GM12878 (cell line): ENCODE measurements at regions of chr6 and their contacts with region 1.

Region 1: GRCh38 chr6:116405138-116405537 is 34.4 kb downstream of the DSE start:
- DNase-seq: peak; percentile 82
- ATAC-seq: peak; percentile 67
- H3K4me3 ChIP-seq: peak overlapping the region; percentile 46; the same call in 1 of the 2 replicates
- H3K27ac ChIP-seq: peak overlapping the region; percentile 90
- H3K4me1 ChIP-seq: peaks cover 52% of the 10 kb centered on the region
- H3K27me3 ChIP-seq: no peaks in the 10 kb centered on the region
- CTCF ChIP-seq: no peak
- EP300 ChIP-seq: 0 out of 4 replicates have a peak, but pooled peaks have one; percentile 37 to 44
- POLR2A ChIP-seq: 0 out of 2 replicates have a peak, but pooled peaks have one; percentile 28
- RAD21 ChIP-seq: no peak

Region 2: DNA sequence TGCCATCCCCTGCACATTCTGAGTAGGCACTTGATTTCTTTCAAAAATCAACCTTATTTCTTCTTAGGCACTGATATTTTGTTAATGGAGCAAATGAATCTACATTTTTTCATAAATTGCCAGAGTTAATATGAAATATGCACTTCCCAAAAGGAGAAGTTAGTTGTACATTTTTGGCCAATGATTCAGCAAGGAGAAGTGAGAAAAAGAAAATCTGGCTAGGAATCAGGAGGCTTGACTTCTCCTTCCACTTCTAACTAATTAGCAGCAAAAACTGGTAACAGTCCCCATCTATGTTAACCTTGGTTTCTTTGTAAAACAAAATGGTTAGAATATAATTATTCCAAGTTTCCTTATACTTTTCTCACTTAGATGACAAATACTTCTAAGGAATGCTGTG is 41.4 kb before region 1 on chr6:
- CTCF ChIA-PET with region 1: interaction called, 4 read pairs
- POLR2A ChIA-PET with region 1: no interaction called
- RAD21 ChIA-PET with region 1: interaction called, 3 read pairs
- SMC1A ChIA-PET with region 1: interaction called, 10 read pairs
- in situ Hi-C with region 1: no loop called
- intact Hi-C with region 1: no loop called
- DNase-seq: no peak
- ATAC-seq: 0 out of 3 replicates have a peak, but pooled peaks have one; percentile 34
- H3K4me3 ChIP-seq: no peak overlapping the region
- H3K27ac ChIP-seq: no peak overlapping the region
- H3K4me1 ChIP-seq: peaks cover 2% of the 10 kb centered on the region; the same call in 1 of the 2 replicates
- H3K27me3 ChIP-seq: no peaks in the 10 kb centered on the region
- CTCF ChIP-seq: no peak
- EP300 ChIP-seq: no peak
- POLR2A ChIP-seq: no peak
- RAD21 ChIP-seq: no peak

Region 3: GRCh38 chr6:116371120-116371917 is 33.8 kb before region 1 on chr6:
- CTCF ChIA-PET with region 1: interaction called, 7 read pairs
- POLR2A ChIA-PET with region 1: interaction called, 4 read pairs
- RAD21 ChIA-PET with region 1: interaction called, 10 read pairs
- SMC1A ChIA-PET with region 1: interaction called, 10 read pairs
- in situ Hi-C with region 1: no loop called
- intact Hi-C with region 1: loop called (anchors 2 kb)
- DNase-seq: no peak
- ATAC-seq: peak; percentile 73
- H3K4me3 ChIP-seq: peak overlapping the region; percentile 92
- H3K27ac ChIP-seq: peak overlapping the region; percentile 92
- H3K4me1 ChIP-seq: peaks cover 23% of the 10 kb centered on the region
- H3K27me3 ChIP-seq: no peaks in the 10 kb centered on the region
- CTCF ChIP-seq: no peak
- EP300 ChIP-seq: 0 out of 4 replicates have a peak, but pooled peaks of 1 of the 2 experiments have one; percentile 34
- POLR2A ChIP-seq: peak; percentile 37; the same call in 1 of the 2 replicates
- RAD21 ChIP-seq: no peak